ENCODE measurements at regions of chr2 and their contacts with region 1.

Region 1: DNA sequence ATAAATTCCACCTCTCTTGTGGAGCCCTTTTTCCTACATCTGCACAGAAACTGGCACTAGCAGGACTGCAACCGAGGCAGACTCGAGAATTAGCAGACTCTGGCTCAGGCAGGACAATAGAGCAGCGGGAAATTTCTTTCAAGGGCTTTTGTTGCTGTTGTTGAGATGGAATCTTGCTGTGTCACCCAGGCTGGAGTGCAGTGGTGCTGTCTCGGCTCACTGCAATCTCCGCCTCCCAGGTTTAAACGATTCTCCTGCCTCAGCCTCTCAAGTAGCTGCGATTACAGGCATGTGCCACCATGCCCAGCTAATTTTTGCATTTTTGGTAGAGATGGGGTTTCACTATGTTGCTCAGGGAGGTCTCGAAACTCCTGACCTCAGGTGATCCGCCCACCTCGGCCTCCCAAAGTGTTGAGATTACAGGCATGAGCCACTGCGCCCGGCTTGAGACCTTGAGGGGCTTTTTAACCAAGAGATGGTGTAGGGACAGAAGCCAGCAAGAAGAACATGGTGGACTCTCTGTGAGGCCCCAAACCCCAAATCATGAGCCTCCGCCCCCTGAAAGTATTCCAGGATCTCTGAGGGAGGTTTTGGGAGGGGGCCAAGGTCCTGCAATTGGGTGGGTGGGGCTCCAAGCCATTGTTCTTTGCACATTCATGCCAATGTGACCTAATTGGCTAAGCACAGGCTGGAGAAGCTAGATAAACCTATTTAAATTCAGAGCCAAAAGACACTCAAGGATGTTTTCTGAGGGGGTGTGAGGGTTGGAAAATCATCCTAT is 68.4 kb upstream of the MSH2 start:
- DNase-seq: peak in 1 of 4 experiments; percentile 81
- ATAC-seq: peak; percentile 67
- H3K4me3 ChIP-seq: peak overlapping the region; percentile 0; the same call in 1 of the 2 replicates
- H3K27ac ChIP-seq: peak overlapping the region; percentile 68
- H3K4me1 ChIP-seq: peaks cover 19 to 26% of the 10 kb centered on the region in 2 experiments
- H3K27me3 ChIP-seq: no peaks in the 10 kb centered on the region
- CTCF ChIP-seq: no peak
- EP300 ChIP-seq: peak; percentile 58; the same call in 1 of the 2 replicates
- POLR2A ChIP-seq: no peak
- RAD21 ChIP-seq: no peak

Region 2: GRCh38 chr2:47373747-47374146 is 39.2 kb after region 1 on chr2:
- CTCF ChIA-PET with region 1: interaction called, 11 read pairs
- POLR2A ChIA-PET with region 1: interaction called, 3 read pairs
- in situ Hi-C with region 1: no loop called
- intact Hi-C with region 1: loop called (anchors 1 kb)
- DNase-seq: peak; percentile 37 to 66 (median 56)
- ATAC-seq: peak; percentile 74
- H3K4me3 ChIP-seq: no peak overlapping the region
- H3K27ac ChIP-seq: no peak overlapping the region
- H3K4me1 ChIP-seq: peaks cover 0 to 12% of the 10 kb centered on the region in 2 experiments; a peak in 3 of 5 replicates
- H3K27me3 ChIP-seq: no peaks in the 10 kb centered on the region
- CTCF ChIP-seq: peak; percentile 58 to 72 (median 69)
- EP300 ChIP-seq: no peak
- POLR2A ChIP-seq: no peak
- RAD21 ChIP-seq: peak; percentile 63 to 87

Region 3: GRCh38 chr2:47386551-47386950 is 52.0 kb after region 1 on chr2:
- CTCF ChIA-PET with region 1: interaction called, 44 read pairs
- POLR2A ChIA-PET with region 1: interaction called, 14 read pairs
- in situ Hi-C with region 1: loop called (anchors 5 kb)
- intact Hi-C with region 1: loop called (anchors 1 kb)
- DNase-seq: no peak
- ATAC-seq: no peak
- H3K4me3 ChIP-seq: no peak overlapping the region
- H3K27ac ChIP-seq: no peak overlapping the region
- H3K4me1 ChIP-seq: no peaks in the 10 kb centered on the region; a peak in 1 of 5 replicates
- H3K27me3 ChIP-seq: no peaks in the 10 kb centered on the region
- CTCF ChIP-seq: no peak
- EP300 ChIP-seq: no peak
- POLR2A ChIP-seq: no peak
- RAD21 ChIP-seq: no peak

Measured in K562 (cell line).